KBM-7 (cell line): ENCODE measurements at regions of chrX and their contacts with region 1.

Region 1: GRCh38 chrX:109485470-109486340 is 3.8 kb upstream of the GUCY2F start:
- DNase-seq: peak; percentile 98

Region 2: DNA sequence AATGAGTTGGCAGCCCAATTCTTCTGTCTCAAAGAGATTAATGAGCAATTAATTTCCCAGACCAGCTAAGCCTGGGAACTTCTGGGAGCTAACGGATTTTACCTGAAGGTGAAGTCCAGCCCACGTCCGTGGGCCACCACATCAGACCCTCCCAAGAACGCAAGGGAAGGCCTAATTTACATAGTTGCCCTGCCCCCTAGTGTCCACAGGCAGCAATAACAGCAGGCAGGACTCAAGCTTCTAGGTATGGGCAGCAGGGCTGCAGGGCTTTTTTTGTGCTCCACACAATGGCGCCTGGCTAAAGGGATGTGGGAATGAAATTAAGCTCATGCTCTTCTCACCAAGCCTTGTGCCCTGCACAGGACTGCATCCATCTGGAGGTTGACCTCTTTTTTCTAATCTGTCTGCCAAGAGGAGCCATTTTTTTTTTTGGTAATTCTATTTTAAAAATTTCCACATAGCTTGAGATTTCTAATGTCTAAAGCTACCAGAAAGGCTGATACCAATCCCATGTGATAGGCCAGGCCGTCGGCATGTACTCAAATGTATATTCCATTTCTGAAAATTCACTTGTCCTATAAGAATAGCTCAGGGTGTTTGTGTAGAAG is 405.3 kb after region 1 on chrX:
- in situ Hi-C with region 1: loop called (anchors 25 kb)
- DNase-seq: peak; percentile 79

Region 3: GRCh38 chrX:110146521-110146920 is 660.8 kb after region 1 on chrX:
- in situ Hi-C with region 1: loop called (anchors 25 kb)
- DNase-seq: peak; percentile 73

Region 4: GRCh38 chrX:110412971-110413721 is 927.4 kb after region 1 on chrX:
- in situ Hi-C with region 1: loop called (anchors 25 kb)
- DNase-seq: peak; percentile 87